Tibial artery (tissue), 4 donors: ENCODE measurements at regions of chr13 and their contacts with region 1.

Region 1: DNA sequence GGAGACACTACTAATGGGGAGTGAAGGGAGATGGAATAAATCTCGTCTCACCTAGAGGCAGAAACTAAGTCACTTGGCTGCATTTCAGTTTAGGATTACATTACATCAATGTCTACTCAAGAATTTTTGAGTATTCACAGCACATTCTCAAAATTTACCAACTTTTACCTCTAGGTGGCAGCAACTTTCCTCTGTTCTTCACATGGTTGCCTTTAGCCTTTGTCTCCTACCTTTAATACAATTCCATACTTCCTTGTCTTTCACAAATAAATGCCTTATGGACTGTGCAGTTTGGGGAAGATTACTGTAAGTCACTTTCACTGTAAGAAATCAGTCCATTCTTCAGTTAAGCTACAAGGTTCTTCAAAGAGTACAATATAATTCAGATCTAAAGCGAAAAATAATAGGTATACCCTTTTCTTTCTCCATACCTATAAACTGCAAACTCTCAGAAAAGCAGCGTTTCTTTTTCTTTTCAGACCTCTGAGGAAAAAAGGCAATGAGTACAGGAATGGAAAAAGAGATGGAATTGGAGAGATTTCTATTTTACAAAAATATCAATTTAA is 379.4 kb downstream of the KLF12 start:
- DNase-seq: no peak
- H3K4me3 ChIP-seq: no peak overlapping the region
- H3K27ac ChIP-seq: no peak overlapping the region
- H3K4me1 ChIP-seq: no peaks in the 10 kb centered on the region
- H3K27me3 ChIP-seq: no peaks in the 10 kb centered on the region
- CTCF ChIP-seq: peak; percentile 58 to 72

Region 2: GRCh38 chr13:73954808-73955207 is 200.0 kb after region 1 on chr13:
- intact Hi-C with region 1: no loop called
- DNase-seq: no peak
- H3K4me3 ChIP-seq: no peak overlapping the region
- H3K27ac ChIP-seq: no peak overlapping the region
- H3K4me1 ChIP-seq: peaks cover 0 to 19% (median 0%) of the 10 kb centered on the region in 4 donors
- H3K27me3 ChIP-seq: no peaks in the 10 kb centered on the region
- CTCF ChIP-seq: no peak

Region 3: GRCh38 chr13:74289861-74290773 is 535.3 kb after region 1 on chr13:
- intact Hi-C with region 1: loop called (anchors 10 kb)
- DNase-seq: no peak
- H3K4me3 ChIP-seq: peak overlapping the region; percentile 6 to 31
- H3K27ac ChIP-seq: no peak overlapping the region
- H3K4me1 ChIP-seq: peaks cover 0 to 32% (median 19%) of the 10 kb centered on the region in 4 donors
- H3K27me3 ChIP-seq: no peaks in the 10 kb centered on the region
- CTCF ChIP-seq: peak in 1 of 2 experiments; percentile 8

Region 4: DNA sequence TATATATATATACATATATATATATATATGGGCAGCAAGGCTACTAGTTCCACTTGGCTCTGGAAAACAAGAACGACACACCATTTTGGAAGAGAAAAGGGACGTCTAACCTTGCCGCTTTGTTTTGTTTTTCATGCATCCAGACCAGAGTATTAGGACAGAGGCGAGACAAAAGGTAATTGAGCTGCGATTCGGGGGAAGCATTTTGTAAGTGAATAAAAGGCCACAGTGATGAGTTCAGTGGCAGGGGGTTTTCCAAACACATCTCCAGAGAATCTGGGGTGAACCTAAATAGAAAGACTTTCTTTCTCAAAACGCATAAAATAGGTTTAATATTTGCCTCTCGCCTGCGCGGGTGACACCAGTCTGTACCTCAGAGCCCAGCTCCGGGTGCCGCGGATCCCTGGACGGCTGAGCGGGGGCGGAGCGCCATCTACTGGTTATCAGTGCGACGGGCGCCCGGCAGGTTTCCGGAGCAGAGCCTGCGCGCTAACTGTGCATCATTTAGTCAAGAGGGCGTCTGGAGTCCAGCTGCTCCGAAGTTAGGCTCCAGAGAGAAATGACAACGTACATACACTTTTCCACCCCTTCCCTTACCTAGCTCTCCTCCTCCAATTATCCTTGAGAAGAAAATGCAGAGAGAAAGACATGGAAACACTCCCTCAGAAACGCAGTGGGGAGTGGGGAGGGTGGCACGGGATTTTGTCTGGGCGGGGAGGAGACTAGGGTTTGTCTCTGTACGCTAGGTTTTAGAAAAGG is 1464.8 kb after region 1 on chr13:
- intact Hi-C with region 1: loop called (anchors 10 kb)
- DNase-seq: peak; percentile 79 to 83
- H3K4me3 ChIP-seq: peak overlapping the region; percentile 3 to 11
- H3K27ac ChIP-seq: no peak overlapping the region
- H3K4me1 ChIP-seq: peaks cover 0 to 8% (median 3%) of the 10 kb centered on the region in 4 donors
- H3K27me3 ChIP-seq: peaks cover 0 to 4% of the 10 kb centered on the region in 2 donors
- CTCF ChIP-seq: peak; percentile 91 to 99